K562 (cell line): ENCODE measurements at regions of chr7 and their contacts with region 1.

Region 1: GRCh38 chr7:139972029-139972428 is 90.7 kb downstream of the PARP12 start:
- DNase-seq: peak in 1 of 4 experiments; percentile 41
- ATAC-seq: peak; percentile 8; the same call in 1 of the 3 replicates
- H3K4me3 ChIP-seq: no peak overlapping the region
- H3K27ac ChIP-seq: no peak overlapping the region
- H3K4me1 ChIP-seq: peaks cover 8 to 17% of the 10 kb centered on the region in 2 experiments; a peak in 4 of 5 replicates
- H3K27me3 ChIP-seq: no peaks in the 10 kb centered on the region
- CTCF ChIP-seq: no peak
- EP300 ChIP-seq: no peak
- POLR2A ChIP-seq: no peak
- RAD21 ChIP-seq: no peak

Region 2: GRCh38 chr7:138726288-138726687 is 1245.7 kb before region 1 on chr7:
- CTCF ChIA-PET with region 1: no interaction called
- POLR2A ChIA-PET with region 1: no interaction called
- in situ Hi-C with region 1: no loop called
- intact Hi-C with region 1: no loop called
- DNase-seq: peak; percentile 32 to 53 (median 40)
- ATAC-seq: peak; percentile 87
- H3K4me3 ChIP-seq: no peak overlapping the region
- H3K27ac ChIP-seq: no peak overlapping the region
- H3K4me1 ChIP-seq: no peaks in the 10 kb centered on the region; a peak in 1 of 5 replicates
- H3K27me3 ChIP-seq: peaks cover 41 to 50% of the 10 kb centered on the region in 2 experiments
- CTCF ChIP-seq: peak; percentile 43 to 61 (median 58); a peak in 5 of 6 replicates
- EP300 ChIP-seq: no peak
- POLR2A ChIP-seq: no peak
- RAD21 ChIP-seq: peak in 1 of 2 experiments; percentile 46; a peak in 2 of 4 replicates

Region 3: GRCh38 chr7:139139150-139139549 is 832.9 kb before region 1 on chr7:
- CTCF ChIA-PET with region 1: no interaction called
- POLR2A ChIA-PET with region 1: no interaction called
- in situ Hi-C with region 1: no loop called
- intact Hi-C with region 1: no loop called
- DNase-seq: no peak
- ATAC-seq: no peak
- H3K4me3 ChIP-seq: no peak overlapping the region
- H3K27ac ChIP-seq: no peak overlapping the region
- H3K4me1 ChIP-seq: no peaks in the 10 kb centered on the region; a peak in 1 of 5 replicates
- H3K27me3 ChIP-seq: no peaks in the 10 kb centered on the region
- CTCF ChIP-seq: no peak
- EP300 ChIP-seq: no peak
- POLR2A ChIP-seq: no peak
- RAD21 ChIP-seq: no peak

Region 4: GRCh38 chr7:139960157-139960556 is 11.9 kb before region 1 on chr7:
- CTCF ChIA-PET with region 1: no interaction called
- POLR2A ChIA-PET with region 1: interaction called, 76 read pairs
- in situ Hi-C with region 1: no loop called
- intact Hi-C with region 1: no loop called
- DNase-seq: no peak
- ATAC-seq: no peak
- H3K4me3 ChIP-seq: no peak overlapping the region
- H3K27ac ChIP-seq: no peak overlapping the region
- H3K4me1 ChIP-seq: peaks cover 0 to 3% of the 10 kb centered on the region in 2 experiments; a peak in 1 of 5 replicates
- H3K27me3 ChIP-seq: no peaks in the 10 kb centered on the region
- CTCF ChIP-seq: no peak
- EP300 ChIP-seq: no peak
- POLR2A ChIP-seq: no peak
- RAD21 ChIP-seq: no peak